PC-3 (cell line): ENCODE measurements at regions of chr4 and their contacts with region 1.

Region 1: GRCh38 chr4:40492691-40493090 is 137.0 kb downstream of the RBM47 start:
- DNase-seq: no peak
- ATAC-seq: no peak
- H3K4me3 ChIP-seq: no peak overlapping the region
- H3K27ac ChIP-seq: no peak overlapping the region
- H3K4me1 ChIP-seq: peaks cover 8% of the 10 kb centered on the region
- H3K27me3 ChIP-seq: no peaks in the 10 kb centered on the region
- CTCF ChIP-seq: no peak

Region 2: DNA sequence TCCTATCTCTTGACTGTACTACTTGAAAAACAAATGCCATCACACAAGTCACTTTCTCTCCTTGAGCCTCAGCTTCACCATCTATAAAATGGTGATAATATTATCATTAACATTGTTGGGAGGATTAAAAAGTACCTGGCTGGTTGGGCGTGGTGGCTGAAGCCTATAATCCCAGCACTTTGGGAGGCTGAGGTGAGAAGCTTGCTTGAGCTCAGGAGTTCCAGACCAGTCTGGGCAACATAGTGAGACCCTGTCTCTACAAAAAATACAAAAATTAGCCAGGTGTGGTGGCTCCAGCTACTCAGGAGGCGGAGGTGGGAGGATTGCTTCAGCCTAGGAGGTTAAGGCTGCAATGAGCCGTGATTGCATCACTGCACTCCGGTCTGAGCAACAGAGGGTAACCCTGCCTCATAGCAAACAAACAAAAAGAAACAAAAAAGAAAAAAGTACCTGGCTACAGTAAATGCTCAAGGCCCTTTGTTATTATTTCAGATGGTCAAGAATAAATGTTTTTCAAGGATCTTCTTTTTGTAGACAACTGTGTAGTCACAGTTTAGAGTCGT is 37.3 kb before region 1 on chr4:
- CTCF ChIA-PET with region 1: no interaction called
- POLR2A ChIA-PET with region 1: no interaction called
- intact Hi-C with region 1: loop called (anchors 5 kb)
- DNase-seq: peak; percentile 50
- ATAC-seq: no peak; the same call in 1 of the 2 replicates
- H3K4me3 ChIP-seq: no peak overlapping the region
- H3K27ac ChIP-seq: peak overlapping the region; percentile 44; the same call in 1 of the 2 replicates
- H3K4me1 ChIP-seq: peaks cover 31% of the 10 kb centered on the region
- H3K27me3 ChIP-seq: no peaks in the 10 kb centered on the region
- CTCF ChIP-seq: no peak

Region 3: GRCh38 chr4:40473578-40474388 is 18.9 kb before region 1 on chr4:
- CTCF ChIA-PET with region 1: no interaction called
- POLR2A ChIA-PET with region 1: no interaction called
- intact Hi-C with region 1: no loop called
- DNase-seq: no peak
- ATAC-seq: no peak
- H3K4me3 ChIP-seq: no peak overlapping the region
- H3K27ac ChIP-seq: no peak overlapping the region
- H3K4me1 ChIP-seq: peaks cover 16% of the 10 kb centered on the region
- H3K27me3 ChIP-seq: no peaks in the 10 kb centered on the region
- CTCF ChIP-seq: no peak

Region 4: GRCh38 chr4:40515398-40516293 is 23.0 kb after region 1 on chr4:
- CTCF ChIA-PET with region 1: no interaction called
- POLR2A ChIA-PET with region 1: no interaction called
- intact Hi-C with region 1: no loop called
- DNase-seq: peak; percentile 5
- ATAC-seq: no peak
- H3K4me3 ChIP-seq: no peak overlapping the region
- H3K27ac ChIP-seq: peak overlapping the region; percentile 52
- H3K4me1 ChIP-seq: peaks cover 23% of the 10 kb centered on the region
- H3K27me3 ChIP-seq: no peaks in the 10 kb centered on the region
- CTCF ChIP-seq: no peak

Region 5: GRCh38 chr4:40548296-40548695 is 55.6 kb after region 1 on chr4:
- CTCF ChIA-PET with region 1: no interaction called
- POLR2A ChIA-PET with region 1: no interaction called
- intact Hi-C with region 1: no loop called
- DNase-seq: no peak
- ATAC-seq: no peak
- H3K4me3 ChIP-seq: no peak overlapping the region
- H3K27ac ChIP-seq: no peak overlapping the region
- H3K4me1 ChIP-seq: peaks cover 18% of the 10 kb centered on the region
- H3K27me3 ChIP-seq: no peaks in the 10 kb centered on the region
- CTCF ChIP-seq: no peak

Region 6: DNA sequence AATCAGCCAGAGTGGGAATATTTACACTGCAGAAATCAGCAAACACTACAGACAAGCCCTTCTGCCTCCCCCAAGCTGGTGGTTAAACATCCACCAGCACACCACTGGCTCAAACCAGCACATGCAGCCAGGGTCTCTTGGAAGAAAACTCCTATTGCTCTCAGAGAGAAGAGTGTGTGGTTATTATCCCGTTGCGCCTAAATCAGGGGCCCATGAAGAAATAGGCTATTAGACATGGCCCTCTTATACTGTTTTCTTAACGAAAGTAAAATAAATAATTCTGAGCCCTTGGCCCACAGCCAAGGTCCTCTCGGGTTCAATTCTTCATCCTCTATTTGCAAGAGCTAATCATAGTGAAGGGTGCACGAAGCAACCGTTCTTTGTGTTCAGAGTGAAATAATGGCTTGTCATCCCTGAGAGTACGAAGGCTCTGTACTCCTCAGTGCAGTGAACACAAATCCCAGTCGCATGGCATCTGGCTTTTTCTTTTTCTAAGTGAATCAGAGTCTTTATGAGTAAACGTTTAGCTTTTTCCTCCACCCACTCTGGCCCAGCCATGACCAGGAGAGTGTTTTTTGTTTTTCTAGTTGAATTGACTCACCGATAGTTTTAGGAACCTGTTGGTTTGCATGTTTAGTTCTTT is 170.4 kb after region 1 on chr4:
- CTCF ChIA-PET with region 1: no interaction called
- POLR2A ChIA-PET with region 1: no interaction called
- intact Hi-C with region 1: no loop called
- DNase-seq: peak; percentile 77
- ATAC-seq: peak; percentile 98
- H3K4me3 ChIP-seq: peak overlapping the region; percentile 58
- H3K27ac ChIP-seq: peak overlapping the region; percentile 75
- H3K4me1 ChIP-seq: peaks cover 11% of the 10 kb centered on the region
- H3K27me3 ChIP-seq: no peaks in the 10 kb centered on the region
- CTCF ChIP-seq: no peak